ENCODE measurements at regions of chrX and their contacts with region 1.

Region 1: GRCh38 chrX:71998836-71999509 is 88.3 kb downstream of the NHSL2 start:
- DNase-seq: peak; percentile 28 to 53 (median 31)
- H3K4me3 ChIP-seq: no peak overlapping the region
- H3K27ac ChIP-seq: no peak overlapping the region
- H3K4me1 ChIP-seq: peaks cover 0 to 9% (median 0%) of the 10 kb centered on the region in 4 experiments
- H3K27me3 ChIP-seq: peaks cover 0 to 3% (median 0%) of the 10 kb centered on the region in 5 experiments

Region 2: DNA sequence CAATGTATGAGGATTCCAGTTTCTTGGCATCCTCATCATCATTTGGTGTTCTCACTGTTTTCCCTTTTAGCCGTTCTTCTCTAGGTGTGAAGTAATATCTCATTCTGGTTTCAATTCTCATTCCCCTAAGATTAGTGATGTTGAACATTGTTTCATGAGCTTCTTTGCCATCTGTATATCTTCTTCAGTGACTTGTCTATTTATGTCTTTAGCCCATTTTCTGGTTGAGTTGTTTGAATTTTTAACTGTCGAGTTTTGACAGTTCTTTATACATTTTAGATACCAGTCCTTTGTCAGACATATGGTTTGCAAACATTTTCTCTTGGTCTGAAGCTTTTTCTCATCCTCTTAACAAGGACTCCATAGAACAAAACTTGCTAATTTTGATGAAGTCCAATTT is 12.8 kb after region 1 on chrX:
- CTCF ChIA-PET with region 1: interaction called, 16 read pairs
- POLR2A ChIA-PET with region 1: no interaction called
- DNase-seq: no peak
- H3K4me3 ChIP-seq: no peak overlapping the region
- H3K27ac ChIP-seq: no peak overlapping the region
- H3K4me1 ChIP-seq: no peaks in the 10 kb centered on the region
- H3K27me3 ChIP-seq: peaks cover 0 to 15% (median 0%) of the 10 kb centered on the region in 5 experiments

Measured in common myeloid progenitor, CD34-positive (primary cell).